BJ (cell line): ENCODE measurements at regions of chr9 and their contacts with region 1.

Region 1: GRCh38 chr9:21812946-21813568 is 10.6 kb downstream of the MTAP start:
- DNase-seq: no peak
- H3K4me3 ChIP-seq: no peak overlapping the region
- H3K27me3 ChIP-seq: no peaks in the 10 kb centered on the region
- CTCF ChIP-seq: peak; percentile 84

Region 2: DNA sequence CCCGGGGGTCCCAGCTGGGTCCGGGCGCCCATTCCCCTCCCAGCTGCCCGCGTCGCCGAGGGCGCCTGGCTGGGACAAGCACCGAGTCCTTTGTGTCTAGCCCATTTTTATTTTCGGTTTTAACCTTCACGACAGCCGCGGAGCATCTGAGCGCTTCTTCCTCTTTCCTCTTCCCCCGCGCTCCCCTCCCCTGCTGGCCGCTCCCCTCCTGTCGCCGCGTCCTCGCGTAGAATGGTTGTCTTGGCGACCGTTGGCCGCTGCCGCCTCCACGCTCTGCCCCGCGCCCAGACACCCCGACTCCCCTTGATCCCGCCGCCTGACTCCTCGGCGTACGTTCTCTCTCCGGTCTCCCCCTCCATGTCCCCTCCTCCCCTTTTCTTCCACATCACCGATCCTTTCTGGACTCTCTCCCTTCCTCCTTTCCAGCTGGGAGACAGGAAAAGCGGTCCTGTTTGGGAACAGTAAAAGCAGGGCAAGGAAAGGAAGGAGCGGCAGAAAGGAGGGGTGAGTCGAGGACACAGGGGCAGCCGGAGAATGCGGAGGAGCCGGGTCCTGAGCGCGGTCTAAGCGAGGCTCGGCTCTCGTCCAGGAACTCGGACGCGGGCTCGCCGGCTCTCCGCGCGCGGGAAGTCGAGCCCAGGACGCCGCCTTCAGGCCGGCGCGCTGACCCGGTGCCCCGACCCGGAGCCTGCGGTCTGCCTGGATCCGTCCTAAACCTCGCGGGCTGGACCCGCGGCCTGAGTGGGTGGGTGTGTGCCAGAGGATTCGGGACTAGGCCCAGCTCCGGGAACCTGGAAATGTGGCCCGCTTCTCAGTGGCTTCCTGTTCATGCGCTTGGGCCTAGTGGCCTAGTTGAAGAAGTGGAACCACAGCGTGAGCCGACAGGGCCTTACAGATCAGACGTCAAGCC is 182.4 kb after region 1 on chr9:
- CTCF ChIA-PET with region 1: interaction called, 14 read pairs
- POLR2A ChIA-PET with region 1: no interaction called
- DNase-seq: no peak
- H3K4me3 ChIP-seq: peak overlapping the region; percentile 86
- H3K27me3 ChIP-seq: no peaks in the 10 kb centered on the region
- CTCF ChIP-seq: peak; percentile 37; the same call in 1 of the 2 replicates

Region 3: DNA sequence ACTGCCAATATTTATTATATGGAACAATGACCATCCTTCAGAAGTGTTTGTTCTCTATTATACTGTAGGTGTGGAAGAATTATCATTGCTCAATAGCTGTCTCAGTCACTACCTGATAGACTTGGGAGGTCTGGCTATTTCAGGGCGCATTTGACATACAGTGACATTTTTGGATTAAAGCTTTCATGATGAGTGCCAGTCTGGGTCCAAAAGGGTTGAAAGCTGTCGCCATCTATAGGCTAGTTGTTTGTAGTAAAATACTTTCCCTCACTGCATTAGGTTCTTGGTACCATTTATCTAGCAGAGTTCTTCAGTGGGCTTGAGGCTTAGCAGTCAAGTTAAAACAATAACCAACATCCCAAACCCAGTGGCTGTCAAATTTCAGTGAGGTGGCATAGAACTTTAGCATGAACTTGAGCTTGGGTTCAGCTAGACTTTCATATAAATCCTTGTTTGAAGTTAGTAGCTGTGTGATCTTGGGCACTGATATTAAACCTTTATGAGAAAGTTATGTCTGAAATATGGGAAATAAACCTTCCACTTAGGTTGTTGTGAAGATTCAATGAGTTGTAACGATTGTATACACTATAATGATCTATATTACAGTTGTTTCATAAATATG is 306.6 kb after region 1 on chr9:
- CTCF ChIA-PET with region 1: interaction called, 48 read pairs
- POLR2A ChIA-PET with region 1: no interaction called
- DNase-seq: no peak
- H3K4me3 ChIP-seq: no peak overlapping the region
- H3K27me3 ChIP-seq: no peaks in the 10 kb centered on the region
- CTCF ChIP-seq: peak; percentile 69

Region 4: DNA sequence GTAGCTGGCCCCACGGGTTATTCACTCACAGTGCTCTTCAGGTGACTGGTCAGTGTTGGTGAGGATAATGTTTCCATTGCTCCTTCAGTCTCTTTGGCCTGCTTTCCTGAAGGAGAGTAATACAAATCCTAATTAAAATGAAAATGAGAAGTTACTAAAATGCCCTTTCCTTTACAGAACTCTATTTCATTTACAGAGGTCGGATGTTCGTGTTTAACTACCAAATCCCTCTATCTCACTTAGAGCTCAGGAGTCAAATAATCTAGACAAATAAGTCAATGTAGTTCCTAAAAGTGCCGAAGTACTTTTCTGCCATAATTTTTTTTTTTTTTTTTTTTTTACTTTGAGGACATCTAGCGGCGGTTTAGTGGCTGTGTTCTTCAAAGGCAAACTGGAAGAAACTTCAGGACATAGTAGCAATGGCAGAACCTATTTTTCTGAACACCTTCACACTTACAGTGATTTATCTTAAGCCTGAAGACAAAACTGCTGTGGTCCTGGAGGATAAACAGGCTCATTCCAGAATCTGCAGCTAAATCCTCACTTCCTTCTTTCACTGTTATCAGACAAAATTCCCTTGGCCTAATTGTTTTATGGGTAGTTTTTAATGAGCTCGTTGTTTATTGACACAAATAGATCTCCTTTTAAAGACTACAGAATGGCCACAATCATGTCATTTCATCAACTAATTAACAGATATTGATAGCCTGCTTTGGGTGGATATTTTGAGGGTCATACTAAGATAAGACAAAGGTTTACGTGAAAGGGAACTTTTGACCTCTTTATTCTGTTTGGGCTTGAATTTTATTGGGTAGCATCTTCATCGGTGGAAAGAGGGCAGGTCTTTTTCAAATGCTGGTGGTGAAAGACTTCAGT is 426.0 kb after region 1 on chr9:
- CTCF ChIA-PET with region 1: interaction called, 68 read pairs
- POLR2A ChIA-PET with region 1: no interaction called
- DNase-seq: no peak
- H3K4me3 ChIP-seq: no peak overlapping the region
- H3K27me3 ChIP-seq: no peaks in the 10 kb centered on the region
- CTCF ChIP-seq: peak; percentile 63